CD8-positive, alpha-beta T cell (primary cell): ENCODE measurements at regions of chr4 and their contacts with region 1.

Region 1: GRCh38 chr4:121192480-121192879 is 28.4 kb upstream of the TNIP3 start:
- DNase-seq: peak in 3 of 9 experiments; percentile 13 to 76 (median 64)
- ATAC-seq: no peak
- H3K4me3 ChIP-seq: no peak overlapping the region
- H3K4me3 Mint-ChIP-seq: peak overlapping the region; percentile 62
- H3K27ac ChIP-seq: no peak overlapping the region
- H3K27ac Mint-ChIP-seq: peak overlapping the region; percentile 32
- H3K4me1 ChIP-seq: peaks cover 45% of the 10 kb centered on the region
- H3K4me1 Mint-ChIP-seq: peaks cover 56% of the 10 kb centered on the region
- H3K27me3 ChIP-seq: no peaks in the 10 kb centered on the region
- H3K27me3 Mint-ChIP-seq: no peaks in the 10 kb centered on the region
- CTCF ChIP-seq: peak; percentile 97

Region 2: GRCh38 chr4:121009578-121010478 is 182.7 kb before region 1 on chr4:
- CTCF ChIA-PET with region 1: interaction called, 3 read pairs
- POLR2A ChIA-PET with region 1: no interaction called
- intact Hi-C with region 1: loop called in 1 of 2 experiments (anchors 10 kb)
- DNase-seq: peak in 2 of 9 experiments; percentile 41 to 67
- ATAC-seq: peak; percentile 94
- H3K4me3 ChIP-seq: no peak overlapping the region
- H3K4me3 Mint-ChIP-seq: peak overlapping the region; percentile 60
- H3K27ac ChIP-seq: peak overlapping the region; percentile 0 to 24
- H3K27ac Mint-ChIP-seq: peak overlapping the region; percentile 92
- H3K4me1 ChIP-seq: peaks cover 81% of the 10 kb centered on the region
- H3K4me1 Mint-ChIP-seq: peaks cover 87% of the 10 kb centered on the region
- H3K27me3 ChIP-seq: no peaks in the 10 kb centered on the region
- H3K27me3 Mint-ChIP-seq: no peaks in the 10 kb centered on the region
- CTCF ChIP-seq: no peak

Region 3: GRCh38 chr4:121122661-121123060 is 69.8 kb before region 1 on chr4:
- CTCF ChIA-PET with region 1: interaction called, 21 read pairs
- POLR2A ChIA-PET with region 1: interaction called, 3 read pairs
- intact Hi-C with region 1: no loop called
- DNase-seq: no peak
- ATAC-seq: no peak
- H3K4me3 ChIP-seq: no peak overlapping the region
- H3K4me3 Mint-ChIP-seq: no peak overlapping the region
- H3K27ac ChIP-seq: no peak overlapping the region
- H3K27ac Mint-ChIP-seq: no peak overlapping the region
- H3K4me1 ChIP-seq: peaks cover 13% of the 10 kb centered on the region
- H3K4me1 Mint-ChIP-seq: peaks cover 31% of the 10 kb centered on the region
- H3K27me3 ChIP-seq: no peaks in the 10 kb centered on the region
- H3K27me3 Mint-ChIP-seq: no peaks in the 10 kb centered on the region
- CTCF ChIP-seq: no peak

Region 4: GRCh38 chr4:121156822-121157769 is 35.4 kb before region 1 on chr4:
- CTCF ChIA-PET with region 1: interaction called, 19 read pairs
- POLR2A ChIA-PET with region 1: no interaction called
- intact Hi-C with region 1: loop called in 1 of 2 experiments (anchors 1 kb)
- DNase-seq: peak in 7 of 9 experiments; percentile 14 to 65 (median 35)
- ATAC-seq: peak; percentile 48
- H3K4me3 ChIP-seq: peak overlapping the region; percentile 54 to 61
- H3K4me3 Mint-ChIP-seq: peak overlapping the region; percentile 96
- H3K27ac ChIP-seq: peak overlapping the region; percentile 29
- H3K27ac Mint-ChIP-seq: peak overlapping the region; percentile 96
- H3K4me1 ChIP-seq: peaks cover 49% of the 10 kb centered on the region
- H3K4me1 Mint-ChIP-seq: peaks cover 53% of the 10 kb centered on the region
- H3K27me3 ChIP-seq: no peaks in the 10 kb centered on the region
- H3K27me3 Mint-ChIP-seq: no peaks in the 10 kb centered on the region
- CTCF ChIP-seq: no peak

Region 5: GRCh38 chr4:121227341-121227792 is 34.9 kb after region 1 on chr4:
- CTCF ChIA-PET with region 1: interaction called, 13 read pairs
- POLR2A ChIA-PET with region 1: no interaction called
- intact Hi-C with region 1: loop called in 1 of 2 experiments (anchors 5 kb)
- DNase-seq: peak in 2 of 9 experiments; percentile 45 to 67
- ATAC-seq: peak; percentile 80
- H3K4me3 ChIP-seq: peak overlapping the region in 1 of 2 experiments; percentile 44
- H3K4me3 Mint-ChIP-seq: peak overlapping the region; percentile 67
- H3K27ac ChIP-seq: peak overlapping the region in 1 of 2 experiments; percentile 71
- H3K27ac Mint-ChIP-seq: peak overlapping the region; percentile 66
- H3K4me1 ChIP-seq: peaks cover 11% of the 10 kb centered on the region
- H3K4me1 Mint-ChIP-seq: peaks cover 35% of the 10 kb centered on the region
- H3K27me3 ChIP-seq: no peaks in the 10 kb centered on the region
- H3K27me3 Mint-ChIP-seq: no peaks in the 10 kb centered on the region
- CTCF ChIP-seq: peak; percentile 24

Region 6: DNA sequence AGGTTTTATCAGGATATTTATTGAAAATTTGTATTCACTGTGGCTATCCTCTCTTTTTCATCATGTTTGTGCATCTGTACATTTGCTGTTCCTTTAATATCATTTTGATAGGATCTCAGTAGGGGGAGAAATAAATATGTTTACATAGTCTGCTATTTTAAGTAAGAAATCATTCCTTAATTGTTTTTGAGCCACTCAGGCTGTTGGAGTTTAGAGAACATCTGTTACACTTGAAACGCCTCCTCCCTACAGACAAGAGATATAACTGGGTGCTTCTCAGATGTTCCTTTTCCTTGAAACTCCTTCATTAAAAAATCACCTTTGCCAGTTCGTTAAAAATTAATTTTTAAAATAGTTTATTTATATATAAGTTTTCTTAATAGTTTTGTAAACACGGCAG is 129.0 kb after region 1 on chr4:
- CTCF ChIA-PET with region 1: no interaction called
- POLR2A ChIA-PET with region 1: no interaction called
- intact Hi-C with region 1: no loop called
- DNase-seq: no peak
- ATAC-seq: no peak
- H3K4me3 ChIP-seq: no peak overlapping the region
- H3K4me3 Mint-ChIP-seq: no peak overlapping the region
- H3K27ac ChIP-seq: no peak overlapping the region
- H3K27ac Mint-ChIP-seq: no peak overlapping the region
- H3K4me1 ChIP-seq: no peaks in the 10 kb centered on the region
- H3K4me1 Mint-ChIP-seq: no peaks in the 10 kb centered on the region
- H3K27me3 ChIP-seq: no peaks in the 10 kb centered on the region
- H3K27me3 Mint-ChIP-seq: peaks cover 14% of the 10 kb centered on the region
- CTCF ChIP-seq: no peak

Region 7: DNA sequence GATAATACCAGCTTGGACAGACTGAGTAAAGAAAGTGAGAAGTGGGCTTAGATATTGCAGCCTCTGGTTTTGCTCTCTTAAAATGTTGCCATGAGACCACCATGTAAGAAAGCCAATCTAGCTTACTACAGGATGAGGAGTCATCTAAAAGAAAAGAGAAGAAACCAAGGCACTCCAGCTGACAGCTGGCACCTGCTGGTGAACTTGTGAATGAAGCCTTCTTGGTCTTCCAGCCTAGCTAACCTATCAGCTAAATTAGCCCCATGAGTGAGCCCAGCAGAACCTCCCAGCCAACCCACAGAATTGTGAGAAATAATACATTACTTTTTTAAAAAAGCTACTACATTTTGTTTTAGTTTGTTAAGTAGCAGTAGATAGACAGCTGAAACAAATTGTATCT is 342.9 kb after region 1 on chr4:
- CTCF ChIA-PET with region 1: no interaction called
- POLR2A ChIA-PET with region 1: no interaction called
- intact Hi-C with region 1: no loop called
- DNase-seq: no peak
- ATAC-seq: no peak
- H3K4me3 ChIP-seq: no peak overlapping the region
- H3K4me3 Mint-ChIP-seq: no peak overlapping the region
- H3K27ac ChIP-seq: no peak overlapping the region
- H3K27ac Mint-ChIP-seq: no peak overlapping the region
- H3K4me1 ChIP-seq: no peaks in the 10 kb centered on the region
- H3K4me1 Mint-ChIP-seq: no peaks in the 10 kb centered on the region
- H3K27me3 ChIP-seq: no peaks in the 10 kb centered on the region
- H3K27me3 Mint-ChIP-seq: peaks cover 22% of the 10 kb centered on the region
- CTCF ChIP-seq: no peak

Region 8: GRCh38 chr4:121726642-121727268 is 534.3 kb after region 1 on chr4:
- CTCF ChIA-PET with region 1: no interaction called
- POLR2A ChIA-PET with region 1: no interaction called
- intact Hi-C with region 1: loop called (anchors 2 to 5 kb)
- DNase-seq: peak in 3 of 9 experiments; percentile 4 to 70 (median 59)
- ATAC-seq: peak; percentile 87
- H3K4me3 ChIP-seq: no peak overlapping the region
- H3K4me3 Mint-ChIP-seq: no peak overlapping the region
- H3K27ac ChIP-seq: no peak overlapping the region
- H3K27ac Mint-ChIP-seq: no peak overlapping the region
- H3K4me1 ChIP-seq: no peaks in the 10 kb centered on the region
- H3K4me1 Mint-ChIP-seq: no peaks in the 10 kb centered on the region
- H3K27me3 ChIP-seq: no peaks in the 10 kb centered on the region
- H3K27me3 Mint-ChIP-seq: no peaks in the 10 kb centered on the region
- CTCF ChIP-seq: peak; percentile 49

Region 9: DNA sequence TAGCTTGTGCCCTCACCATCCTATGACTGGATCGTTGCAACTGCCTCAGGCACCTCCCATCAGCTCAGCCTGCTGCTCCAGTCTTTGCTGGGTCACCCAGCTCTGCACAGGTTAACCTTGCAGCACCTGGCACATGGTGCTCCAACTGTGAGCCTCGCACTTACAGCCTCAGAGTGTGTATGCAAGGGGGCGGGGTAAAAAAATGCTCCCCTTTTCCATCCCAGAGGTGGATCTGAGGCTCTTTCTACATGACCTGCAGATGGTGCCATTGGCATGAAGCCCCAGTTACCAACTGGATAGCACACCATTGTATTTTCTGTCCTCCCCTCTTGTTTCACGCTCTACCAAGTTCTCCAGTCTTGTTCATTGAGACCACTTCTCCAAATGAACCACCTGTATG is 805.5 kb after region 1 on chr4:
- CTCF ChIA-PET with region 1: no interaction called
- POLR2A ChIA-PET with region 1: no interaction called
- intact Hi-C with region 1: no loop called
- DNase-seq: peak in 3 of 9 experiments; percentile 4 to 19 (median 15)
- ATAC-seq: no peak
- H3K4me3 ChIP-seq: no peak overlapping the region
- H3K4me3 Mint-ChIP-seq: no peak overlapping the region
- H3K27ac ChIP-seq: no peak overlapping the region
- H3K27ac Mint-ChIP-seq: no peak overlapping the region
- H3K4me1 ChIP-seq: no peaks in the 10 kb centered on the region
- H3K4me1 Mint-ChIP-seq: no peaks in the 10 kb centered on the region
- H3K27me3 ChIP-seq: no peaks in the 10 kb centered on the region
- H3K27me3 Mint-ChIP-seq: peaks cover 18% of the 10 kb centered on the region
- CTCF ChIP-seq: no peak